Keratinocyte (primary cell): ENCODE measurements at regions of chr3 and their contacts with region 1.

Region 1: GRCh38 chr3:49673715-49674496 is at the start of gene APEH:
- DNase-seq: peak; percentile 96
- H3K4me3 ChIP-seq: peak within 1 kb of the TSS; percentile 66 to 87 (median 83)
- H3K27ac ChIP-seq: peak within 1 kb of the TSS; percentile 90
- H3K4me1 ChIP-seq: peaks cover 14% of the 10 kb centered on the region
- H3K27me3 ChIP-seq: no peaks in the 10 kb centered on the region
- CTCF ChIP-seq: no peak
- polyA plus RNA-seq, gene APEH: 106 to 161 TPM (median 160 TPM) in 3 replicates

Region 2: DNA sequence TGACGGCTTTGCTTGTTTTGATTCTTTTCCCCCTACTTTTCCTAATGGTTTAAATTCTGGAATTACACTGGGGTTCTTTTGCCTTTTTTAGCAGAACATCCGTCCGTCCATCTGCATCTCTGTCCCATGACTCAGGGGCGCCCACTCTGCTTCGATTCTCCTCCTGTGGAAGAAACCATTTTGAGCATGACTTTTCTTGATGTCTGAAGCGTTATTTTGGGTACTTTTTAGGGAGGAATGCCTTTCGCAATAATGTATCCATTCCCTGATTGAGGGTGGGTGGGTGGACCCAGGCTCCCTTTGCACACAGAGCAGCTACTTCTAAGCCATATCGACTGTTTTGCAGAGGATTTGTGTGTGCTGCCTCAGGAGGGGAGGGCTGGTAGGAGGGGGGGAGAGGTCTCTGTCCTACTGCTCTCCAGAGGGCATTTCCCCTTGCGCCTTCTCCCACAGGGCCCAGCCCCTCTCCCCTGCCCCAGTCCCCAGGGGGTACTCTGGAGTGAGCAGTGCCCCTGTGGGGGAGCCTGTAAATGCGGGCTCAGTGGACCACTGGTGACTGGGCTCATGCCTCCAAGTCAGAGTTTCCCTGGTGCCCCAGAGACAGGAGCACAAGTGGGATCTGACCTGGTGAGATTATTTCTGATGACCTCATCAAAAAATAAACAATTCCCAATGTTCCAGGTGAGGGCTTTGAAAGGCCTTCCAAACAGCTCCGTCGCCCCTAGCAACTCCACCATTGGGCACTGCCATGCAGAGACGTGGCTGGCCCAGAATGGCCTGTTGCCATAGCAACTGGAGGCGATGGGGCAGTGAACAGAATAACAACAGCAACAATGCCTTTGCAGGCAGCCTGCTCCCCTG is 139.1 kb before region 1 on chr3:
- dilution Hi-C with region 1: no loop called
- DNase-seq: no peak
- H3K4me3 ChIP-seq: no peak overlapping the region
- H3K27ac ChIP-seq: no peak overlapping the region
- H3K4me1 ChIP-seq: no peaks in the 10 kb centered on the region
- H3K27me3 ChIP-seq: no peaks in the 10 kb centered on the region
- CTCF ChIP-seq: no peak

Region 3: GRCh38 chr3:49553692-49554632 is 119.9 kb before region 1 on chr3 and contains the start of gene BSN:
- dilution Hi-C with region 1: loop called (anchors 25 kb)
- DNase-seq: peak; percentile 26
- H3K4me3 ChIP-seq: peak within 1 kb of the TSS; percentile 41 to 78 (median 75)
- H3K27ac ChIP-seq: peak within 1 kb of the TSS; percentile 24
- H3K4me1 ChIP-seq: peaks cover 11% of the 10 kb centered on the region
- H3K27me3 ChIP-seq: peaks cover 24% of the 10 kb centered on the region
- CTCF ChIP-seq: no peak
- polyA plus RNA-seq, gene BSN: under 0.01 to 0.01 TPM (median under 0.01 TPM) in 3 replicates

Region 4: GRCh38 chr3:49712631-49713319 is 38.9 kb after region 1 on chr3:
- dilution Hi-C with region 1: no loop called
- DNase-seq: no peak
- H3K4me3 ChIP-seq: no peak overlapping the region
- H3K27ac ChIP-seq: no peak overlapping the region
- H3K4me1 ChIP-seq: peaks cover 3% of the 10 kb centered on the region
- H3K27me3 ChIP-seq: no peaks in the 10 kb centered on the region
- CTCF ChIP-seq: no peak